MCF 10A (cell line): ENCODE measurements at regions of chr6 and their contacts with region 1.

Region 1: DNA sequence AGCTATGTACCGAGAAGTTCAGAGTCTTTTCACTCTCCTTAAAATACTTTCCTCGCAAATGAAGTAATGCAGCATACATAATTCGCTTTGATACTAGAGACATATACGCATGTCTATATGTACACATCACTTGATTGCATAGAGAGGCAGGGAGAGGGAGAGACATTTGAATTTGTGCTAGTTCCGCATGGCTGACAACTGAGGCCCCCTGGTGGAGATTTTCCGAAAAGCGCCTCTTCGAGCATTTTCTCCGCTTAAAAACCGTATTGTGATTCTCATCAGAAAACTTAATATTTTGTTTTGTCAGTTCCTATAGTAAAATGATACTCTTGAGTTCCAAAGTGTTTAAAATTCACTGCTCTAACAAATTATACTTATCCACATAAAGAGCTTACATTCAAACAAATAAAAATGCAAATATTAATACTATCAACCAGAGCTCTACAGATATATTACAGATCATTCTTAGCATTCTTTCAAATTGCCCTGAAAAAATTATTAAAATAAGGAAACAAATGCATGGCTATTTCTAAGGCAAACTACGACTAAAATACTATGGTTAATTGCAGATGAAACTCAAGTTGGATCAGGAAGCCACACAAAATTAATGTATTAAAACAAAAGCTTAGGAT is 637 bp downstream of the MYLK4 start:
- DNase-seq: peak; percentile 63
- H3K4me3 Mint-ChIP-seq: no peak overlapping the region
- H3K27ac Mint-ChIP-seq: no peak overlapping the region
- H3K4me1 Mint-ChIP-seq: no peaks in the 10 kb centered on the region
- H3K27me3 Mint-ChIP-seq: no peaks in the 10 kb centered on the region
- CTCF ChIP-seq: peak; percentile 80

Region 2: DNA sequence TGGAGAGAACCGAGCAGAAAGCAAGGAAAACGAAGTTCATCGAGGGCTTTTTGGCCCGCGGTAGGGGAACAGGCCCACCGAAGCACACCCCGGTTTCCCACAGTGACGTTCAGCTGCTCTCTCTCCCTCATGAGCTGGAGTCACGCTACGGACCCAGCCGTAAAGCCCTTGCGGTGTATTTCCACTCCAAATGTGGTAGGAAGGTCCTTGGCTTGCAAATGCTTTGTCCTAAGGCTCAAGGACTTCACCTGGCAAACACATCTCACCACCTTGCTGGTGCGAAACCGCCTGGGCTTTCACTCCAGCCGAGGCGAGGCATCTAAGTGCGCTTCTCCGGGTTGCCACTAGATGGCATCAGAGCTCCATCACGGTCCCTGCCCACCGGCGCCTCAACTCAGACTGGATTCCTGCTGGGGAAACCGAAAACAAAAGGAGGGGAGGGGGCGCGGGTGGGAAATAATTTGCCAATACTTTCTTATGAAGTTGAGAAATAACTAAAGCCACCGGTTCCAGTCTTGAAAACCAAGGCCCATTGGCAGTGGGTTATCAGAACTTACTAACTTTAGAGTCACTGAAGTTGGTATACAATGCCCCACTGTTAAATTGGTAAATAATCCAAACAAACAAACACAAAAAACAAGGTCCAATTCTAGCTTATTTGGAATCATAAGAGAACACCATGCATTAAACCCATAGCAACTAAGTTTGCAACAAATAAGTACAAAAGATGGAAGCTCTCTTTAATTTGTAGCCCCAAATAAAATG is 1153.8 kb before region 1 on chr6:
- CTCF ChIA-PET with region 1: interaction called, 12 read pairs
- POLR2A ChIA-PET with region 1: interaction called, 3 read pairs
- intact Hi-C with region 1: loop called (anchors 1 kb)
- DNase-seq: peak; percentile 55
- H3K4me3 Mint-ChIP-seq: no peak overlapping the region
- H3K27ac Mint-ChIP-seq: no peak overlapping the region
- H3K4me1 Mint-ChIP-seq: peaks cover 28% of the 10 kb centered on the region
- H3K27me3 Mint-ChIP-seq: peaks cover 21% of the 10 kb centered on the region
- CTCF ChIP-seq: peak; percentile 93

Region 3: GRCh38 chr6:2721219-2721618 is 28.9 kb before region 1 on chr6:
- CTCF ChIA-PET with region 1: interaction called, 14 read pairs
- POLR2A ChIA-PET with region 1: interaction called, 3 read pairs
- intact Hi-C with region 1: no loop called
- DNase-seq: no peak
- H3K4me3 Mint-ChIP-seq: no peak overlapping the region
- H3K27ac Mint-ChIP-seq: no peak overlapping the region
- H3K4me1 Mint-ChIP-seq: no peaks in the 10 kb centered on the region
- H3K27me3 Mint-ChIP-seq: no peaks in the 10 kb centered on the region
- CTCF ChIP-seq: no peak

Region 4: DNA sequence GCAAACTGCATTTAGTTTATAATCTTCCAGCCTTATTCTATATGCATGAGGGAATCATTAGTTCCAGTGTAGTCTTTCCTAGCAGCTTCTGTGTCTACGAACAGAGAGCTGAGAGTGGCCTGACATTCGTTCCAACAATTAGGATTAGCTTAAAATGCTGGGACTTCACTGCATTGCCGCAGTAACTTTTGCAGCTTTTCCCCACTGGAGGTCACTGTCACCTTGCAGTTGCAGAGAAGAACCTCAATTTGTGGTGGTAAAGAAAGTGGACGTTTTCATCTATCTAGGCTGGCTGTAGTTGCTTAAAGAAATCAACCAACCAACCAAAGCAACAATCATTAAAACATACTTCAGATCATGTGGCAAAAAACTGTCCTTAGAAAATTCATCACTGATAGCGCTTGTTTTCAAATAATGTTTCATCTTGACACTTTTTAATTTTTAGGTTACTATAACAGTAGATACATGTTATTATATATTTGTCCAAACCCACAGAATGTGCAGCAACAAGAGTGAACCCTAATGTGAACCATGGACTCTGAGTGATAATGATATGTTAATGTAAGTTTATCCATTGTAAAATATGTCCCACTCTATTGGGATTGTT is 11.6 kb before region 1 on chr6:
- CTCF ChIA-PET with region 1: interaction called, 66 read pairs
- POLR2A ChIA-PET with region 1: interaction called, 3 read pairs
- intact Hi-C with region 1: no loop called
- DNase-seq: peak; percentile 52
- H3K4me3 Mint-ChIP-seq: no peak overlapping the region
- H3K27ac Mint-ChIP-seq: no peak overlapping the region
- H3K4me1 Mint-ChIP-seq: no peaks in the 10 kb centered on the region
- H3K27me3 Mint-ChIP-seq: no peaks in the 10 kb centered on the region
- CTCF ChIP-seq: peak; percentile 59

Region 5: GRCh38 chr6:2973676-2974075 is 223.6 kb after region 1 on chr6:
- CTCF ChIA-PET with region 1: no interaction called
- POLR2A ChIA-PET with region 1: no interaction called
- intact Hi-C with region 1: no loop called
- DNase-seq: peak; percentile 21
- H3K4me3 Mint-ChIP-seq: no peak overlapping the region
- H3K27ac Mint-ChIP-seq: no peak overlapping the region
- H3K4me1 Mint-ChIP-seq: peaks cover 6% of the 10 kb centered on the region
- H3K27me3 Mint-ChIP-seq: no peaks in the 10 kb centered on the region
- CTCF ChIP-seq: no peak

Region 6: DNA sequence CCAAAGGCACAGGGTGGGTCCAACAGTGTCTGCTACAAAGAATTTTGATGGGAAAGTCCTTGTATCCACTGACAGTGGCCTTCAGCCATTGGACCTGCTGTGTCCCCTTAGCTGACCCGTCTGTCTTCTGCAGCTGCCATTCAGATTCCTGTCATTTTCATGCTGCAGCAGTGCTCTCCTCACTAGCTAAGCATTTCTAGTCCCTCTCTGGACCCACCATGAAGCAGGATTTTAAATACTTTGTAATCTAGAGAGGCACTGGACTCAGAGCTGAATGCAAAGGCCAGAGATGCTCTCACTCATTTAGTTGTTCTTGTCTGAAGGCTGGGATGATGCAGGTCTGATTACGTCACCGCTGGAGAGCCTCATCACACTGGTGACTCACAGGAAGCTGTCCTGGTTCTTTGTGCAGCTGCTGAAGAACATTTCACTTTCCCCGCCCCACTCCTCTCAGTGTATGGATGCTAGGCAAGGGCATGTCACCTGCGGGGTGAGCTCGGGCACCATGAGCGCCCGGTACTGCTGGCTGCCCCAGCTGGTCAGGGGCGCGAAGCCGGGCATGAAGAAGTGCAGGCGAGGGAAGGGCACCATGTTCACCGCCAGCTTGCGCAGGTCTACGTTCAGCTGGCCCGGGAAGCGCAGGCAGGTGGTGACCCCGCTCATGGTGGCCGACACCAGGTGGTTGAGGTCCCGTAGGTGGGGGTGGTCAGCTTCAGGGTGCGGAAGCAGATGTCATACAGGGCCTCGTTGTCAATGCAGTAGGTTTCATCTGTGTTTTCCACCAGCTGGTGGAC is 426.7 kb after region 1 on chr6:
- CTCF ChIA-PET with region 1: no interaction called
- POLR2A ChIA-PET with region 1: no interaction called
- intact Hi-C with region 1: no loop called
- DNase-seq: peak; percentile 84
- H3K4me3 Mint-ChIP-seq: no peak overlapping the region
- H3K27ac Mint-ChIP-seq: no peak overlapping the region
- H3K4me1 Mint-ChIP-seq: no peaks in the 10 kb centered on the region
- H3K27me3 Mint-ChIP-seq: no peaks in the 10 kb centered on the region
- CTCF ChIP-seq: no peak